IMR-90 (cell line): ENCODE measurements at regions of chr2 and their contacts with region 1.

Region 1: DNA sequence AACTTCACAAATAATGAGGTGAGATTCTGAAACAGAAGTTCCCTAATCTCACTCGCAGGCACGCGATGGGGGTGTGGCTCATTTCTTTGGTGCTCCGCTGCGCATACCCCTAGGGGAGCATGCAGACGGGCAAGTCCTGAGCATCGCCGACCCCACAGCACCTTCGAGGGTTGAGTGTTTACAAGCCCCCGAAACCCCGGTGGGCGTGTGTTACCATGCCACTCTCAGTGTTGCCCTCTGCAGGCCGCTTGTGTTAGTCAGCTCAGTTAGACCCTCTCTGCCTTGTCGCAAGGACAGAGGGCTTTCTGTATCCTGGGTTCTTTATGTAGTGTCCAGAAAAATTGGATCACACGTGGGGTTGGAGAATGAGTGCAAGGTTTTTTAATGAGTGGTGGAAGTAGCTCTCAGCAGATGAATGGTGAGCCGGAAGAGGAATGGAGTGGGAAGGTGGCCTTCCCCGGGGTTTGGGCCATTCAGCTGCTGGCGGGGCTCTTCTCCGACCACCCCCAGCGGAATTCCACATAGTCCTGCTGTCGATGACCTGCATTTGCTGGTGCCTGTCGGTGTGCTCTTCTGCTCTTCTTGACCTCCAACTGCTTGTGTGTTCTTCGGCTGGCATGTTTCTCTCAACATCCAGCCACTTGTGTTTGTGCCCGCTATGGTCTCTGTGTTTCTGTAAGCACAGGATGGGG is 191.3 kb downstream of the RPRM start:
- DNase-seq: no peak
- ATAC-seq: no peak
- H3K4me3 ChIP-seq: no peak overlapping the region
- H3K27ac ChIP-seq: no peak overlapping the region
- H3K4me1 ChIP-seq: no peaks in the 10 kb centered on the region
- H3K27me3 ChIP-seq: no peaks in the 10 kb centered on the region
- CTCF ChIP-seq: no peak
- POLR2A ChIP-seq: no peak
- RAD21 ChIP-seq: no peak

Region 2: DNA sequence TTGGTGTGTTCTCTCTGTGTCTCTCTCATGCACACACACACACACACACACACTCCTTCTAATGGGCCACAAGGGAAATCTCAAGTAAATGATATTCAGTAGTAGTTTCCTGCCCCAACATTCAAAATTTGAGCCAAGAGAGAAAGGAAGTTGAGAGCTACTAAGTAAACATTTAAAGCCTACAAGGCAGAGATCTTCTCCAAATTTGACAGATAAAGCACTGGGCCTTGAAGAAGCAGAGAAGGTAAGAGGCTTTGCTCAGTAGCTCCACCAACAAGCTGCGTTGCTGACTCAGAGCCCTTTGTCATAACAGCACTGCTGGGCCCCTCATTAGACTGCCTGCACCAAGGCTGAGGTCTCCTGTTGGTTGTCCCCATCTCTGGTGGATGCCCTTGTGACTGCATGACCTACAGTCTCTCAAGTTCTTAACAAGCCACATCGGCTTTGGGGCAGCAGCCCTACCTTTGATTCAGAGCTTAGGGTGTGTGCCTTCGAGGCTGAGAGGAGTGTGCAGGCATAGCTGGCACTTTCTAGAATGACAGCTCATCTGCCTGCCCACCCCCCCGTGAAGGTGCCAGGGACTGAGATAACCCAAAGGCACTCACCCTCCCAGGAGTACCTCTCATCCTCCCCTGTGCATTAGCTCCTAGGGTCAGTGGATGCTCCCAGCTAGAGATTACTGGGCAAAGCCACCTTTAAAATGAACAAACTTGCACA is 1520.7 kb before region 1 on chr2:
- CTCF ChIA-PET with region 1: no interaction called
- POLR2A ChIA-PET with region 1: no interaction called
- dilution Hi-C with region 1: no loop called
- in situ Hi-C with region 1: no loop called
- intact Hi-C with region 1: loop called (anchors 5 kb)
- DNase-seq: peak; percentile 19
- ATAC-seq: no peak
- H3K4me3 ChIP-seq: no peak overlapping the region
- H3K27ac ChIP-seq: no peak overlapping the region
- H3K4me1 ChIP-seq: peaks cover 2% of the 10 kb centered on the region; the same call in 1 of the 2 replicates
- H3K27me3 ChIP-seq: no peaks in the 10 kb centered on the region
- CTCF ChIP-seq: no peak
- POLR2A ChIP-seq: no peak
- RAD21 ChIP-seq: no peak